Endothelial cell of umbilical vein (primary cell): ENCODE measurements at regions of chr6 and their contacts with region 1.

Region 1: DNA sequence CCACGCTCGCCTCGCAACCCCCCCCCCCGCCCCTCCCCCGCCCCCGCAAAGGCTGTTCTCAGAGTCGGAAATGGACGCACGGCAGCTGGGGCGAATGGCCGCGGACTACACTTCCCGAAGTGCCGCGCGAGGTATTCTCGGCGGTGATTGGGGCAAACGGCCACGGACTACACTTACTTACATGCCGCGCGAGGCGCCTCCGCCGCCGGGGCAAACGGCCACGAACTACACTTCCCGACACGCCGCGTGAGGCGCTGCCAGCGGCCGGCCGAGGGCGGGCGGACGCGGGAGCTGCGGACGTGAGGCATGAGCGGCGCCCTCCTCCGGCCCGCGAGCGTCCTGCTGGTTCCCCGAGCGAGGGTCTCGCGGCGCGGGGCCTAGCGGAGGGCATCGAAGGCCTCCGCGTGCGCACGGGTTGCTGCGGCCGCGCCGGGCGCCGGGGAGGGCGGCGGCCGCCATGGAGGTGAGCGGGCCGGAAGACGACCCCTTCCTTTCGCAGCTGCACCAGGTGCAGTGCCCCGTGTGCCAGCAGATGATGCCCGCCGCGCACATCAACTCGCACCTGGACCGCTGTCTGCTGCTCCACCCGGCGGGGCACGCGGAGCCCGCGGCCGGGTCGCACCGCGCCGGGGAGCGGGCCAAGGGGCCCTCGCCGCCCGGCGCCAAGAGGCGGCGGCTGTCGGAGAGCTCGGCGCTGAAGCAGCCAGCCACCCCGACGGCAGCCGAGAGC is at the start of gene WRNIP1:
- DNase-seq: peak; percentile 99
- H3K4me3 ChIP-seq: peak within 1 kb of the TSS; percentile 72 to 98 (median 97)
- H3K27ac ChIP-seq: peak within 1 kb of the TSS; percentile 79
- H3K4me1 ChIP-seq: peaks cover 40% of the 10 kb centered on the region
- H3K27me3 ChIP-seq: no peaks in the 10 kb centered on the region
- CTCF ChIP-seq: peak; percentile 65 to 66
- POLR2A ChIP-seq: no peak
- total RNA-seq, gene WRNIP1: 47.7 and 50.1 TPM in 2 replicates

Region 2: GRCh38 chr6:2111162-2111677 is 654.1 kb before region 1 on chr6:
- CTCF ChIA-PET with region 1: no interaction called
- POLR2A ChIA-PET with region 1: no interaction called
- dilution Hi-C with region 1: no loop called
- intact Hi-C with region 1: loop called (anchors 5 kb)
- DNase-seq: peak; percentile 97
- H3K4me3 ChIP-seq: peak overlapping the region in 1 of 3 experiments; percentile 51
- H3K27ac ChIP-seq: peak overlapping the region; percentile 76
- H3K4me1 ChIP-seq: peaks cover 40% of the 10 kb centered on the region
- H3K27me3 ChIP-seq: no peaks in the 10 kb centered on the region
- CTCF ChIP-seq: no peak
- POLR2A ChIP-seq: no peak

Region 3: GRCh38 chr6:2718334-2719092 is 46.8 kb before region 1 on chr6:
- CTCF ChIA-PET with region 1: no interaction called
- POLR2A ChIA-PET with region 1: no interaction called
- dilution Hi-C with region 1: no loop called
- intact Hi-C with region 1: loop called (anchors 1 kb)
- DNase-seq: peak; percentile 81
- H3K4me3 ChIP-seq: no peak overlapping the region
- H3K27ac ChIP-seq: peak overlapping the region; percentile 89
- H3K4me1 ChIP-seq: peaks cover 23% of the 10 kb centered on the region
- H3K27me3 ChIP-seq: no peaks in the 10 kb centered on the region
- CTCF ChIP-seq: no peak
- POLR2A ChIP-seq: no peak

Region 4: DNA sequence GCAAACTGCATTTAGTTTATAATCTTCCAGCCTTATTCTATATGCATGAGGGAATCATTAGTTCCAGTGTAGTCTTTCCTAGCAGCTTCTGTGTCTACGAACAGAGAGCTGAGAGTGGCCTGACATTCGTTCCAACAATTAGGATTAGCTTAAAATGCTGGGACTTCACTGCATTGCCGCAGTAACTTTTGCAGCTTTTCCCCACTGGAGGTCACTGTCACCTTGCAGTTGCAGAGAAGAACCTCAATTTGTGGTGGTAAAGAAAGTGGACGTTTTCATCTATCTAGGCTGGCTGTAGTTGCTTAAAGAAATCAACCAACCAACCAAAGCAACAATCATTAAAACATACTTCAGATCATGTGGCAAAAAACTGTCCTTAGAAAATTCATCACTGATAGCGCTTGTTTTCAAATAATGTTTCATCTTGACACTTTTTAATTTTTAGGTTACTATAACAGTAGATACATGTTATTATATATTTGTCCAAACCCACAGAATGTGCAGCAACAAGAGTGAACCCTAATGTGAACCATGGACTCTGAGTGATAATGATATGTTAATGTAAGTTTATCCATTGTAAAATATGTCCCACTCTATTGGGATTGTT is 26.9 kb before region 1 on chr6:
- CTCF ChIA-PET with region 1: interaction called, 53 read pairs
- POLR2A ChIA-PET with region 1: no interaction called
- dilution Hi-C with region 1: no loop called
- intact Hi-C with region 1: loop called (anchors 2 kb)
- DNase-seq: peak; percentile 72
- H3K4me3 ChIP-seq: no peak overlapping the region
- H3K27ac ChIP-seq: no peak overlapping the region
- H3K4me1 ChIP-seq: no peaks in the 10 kb centered on the region
- H3K27me3 ChIP-seq: no peaks in the 10 kb centered on the region
- CTCF ChIP-seq: peak; percentile 54 to 64
- POLR2A ChIP-seq: no peak

Region 5: DNA sequence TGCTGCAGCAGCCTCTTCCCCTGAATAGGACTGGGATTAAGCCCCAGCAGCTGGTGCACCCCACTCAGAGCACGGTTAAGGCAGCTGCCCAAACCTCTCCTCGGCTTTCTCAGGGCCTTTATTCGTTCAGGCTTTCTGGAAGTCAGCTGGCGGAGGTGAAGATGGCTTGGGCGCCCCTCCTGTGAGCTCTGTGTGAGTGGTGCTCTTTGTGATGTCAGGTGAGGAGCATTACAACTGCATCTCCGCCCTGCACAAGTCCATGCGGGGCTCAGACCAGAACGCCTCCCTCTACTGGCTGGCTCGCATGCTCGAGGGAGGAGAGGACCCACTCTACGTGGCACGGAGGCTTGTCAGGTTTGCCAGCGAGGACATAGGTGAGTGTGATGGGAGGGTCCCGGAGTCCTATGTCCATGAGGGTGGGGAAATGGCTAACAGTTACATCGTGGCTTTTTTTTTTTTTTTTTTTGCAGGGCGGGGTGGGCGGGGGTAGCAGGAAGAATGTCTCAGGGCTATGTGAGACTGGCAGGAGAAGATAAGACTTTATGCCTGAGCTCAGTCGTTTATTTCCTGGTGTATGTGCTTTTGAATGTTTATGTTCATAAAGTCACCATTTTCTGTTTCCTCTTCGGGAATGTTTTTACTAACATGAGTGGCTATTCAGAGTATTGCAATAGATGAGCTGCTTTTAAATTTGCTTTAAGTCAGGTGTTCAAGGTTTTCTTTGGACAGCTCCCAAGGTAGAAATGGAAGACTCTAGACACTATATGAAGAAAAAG is 18.0 kb after region 1 on chr6:
- CTCF ChIA-PET with region 1: interaction called, 54 read pairs
- POLR2A ChIA-PET with region 1: interaction called, 12 read pairs
- dilution Hi-C with region 1: no loop called
- intact Hi-C with region 1: loop called (anchors 1 kb)
- DNase-seq: peak; percentile 94
- H3K4me3 ChIP-seq: peak overlapping the region in 1 of 3 experiments; percentile 8
- H3K27ac ChIP-seq: peak overlapping the region; percentile 73
- H3K4me1 ChIP-seq: peaks cover 23% of the 10 kb centered on the region
- H3K27me3 ChIP-seq: no peaks in the 10 kb centered on the region
- CTCF ChIP-seq: peak in 1 of 2 donors; percentile 35
- POLR2A ChIP-seq: no peak

Region 6: DNA sequence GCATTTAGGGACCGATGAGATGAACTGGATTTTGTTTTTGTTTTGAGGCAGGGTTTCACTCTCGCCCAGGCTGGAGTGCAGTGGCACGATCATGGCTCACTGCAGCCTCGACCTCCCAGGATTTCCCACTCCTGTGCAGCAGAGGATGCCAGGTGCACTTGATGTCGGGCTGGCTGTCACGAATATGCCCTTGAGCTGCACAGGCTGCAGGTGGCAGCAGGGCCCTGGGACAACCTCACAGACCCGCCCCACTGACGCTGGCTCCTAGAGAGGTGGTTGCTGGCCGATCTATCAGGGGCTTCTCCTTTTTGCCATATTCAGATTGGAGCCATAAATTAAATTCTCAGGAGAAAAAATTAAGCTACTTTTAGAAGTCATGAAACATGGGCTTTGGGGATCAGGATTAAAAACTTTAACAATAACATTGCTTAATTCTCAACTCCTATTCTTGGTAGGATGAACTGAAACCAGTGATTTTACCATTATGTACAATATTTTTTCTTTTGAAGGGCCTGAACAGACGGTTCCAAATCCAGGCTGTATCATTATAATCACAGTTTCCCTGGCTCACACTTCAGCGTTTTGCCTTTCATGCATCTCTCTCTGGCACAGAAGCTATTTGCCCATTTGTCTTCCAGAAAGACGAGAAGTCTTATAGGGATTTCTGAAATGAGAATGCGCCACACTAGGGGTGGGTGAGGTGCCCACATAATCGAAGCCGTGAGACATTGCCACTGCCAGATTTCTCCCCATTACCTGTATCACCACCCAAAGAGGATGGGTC is 266.7 kb after region 1 on chr6:
- CTCF ChIA-PET with region 1: no interaction called
- POLR2A ChIA-PET with region 1: no interaction called
- dilution Hi-C with region 1: no loop called
- intact Hi-C with region 1: no loop called
- DNase-seq: no peak
- H3K4me3 ChIP-seq: no peak overlapping the region
- H3K27ac ChIP-seq: no peak overlapping the region
- H3K4me1 ChIP-seq: no peaks in the 10 kb centered on the region
- H3K27me3 ChIP-seq: peaks cover 0 to 3% of the 10 kb centered on the region in 2 experiments
- CTCF ChIP-seq: no peak
- POLR2A ChIP-seq: no peak

Region 7: DNA sequence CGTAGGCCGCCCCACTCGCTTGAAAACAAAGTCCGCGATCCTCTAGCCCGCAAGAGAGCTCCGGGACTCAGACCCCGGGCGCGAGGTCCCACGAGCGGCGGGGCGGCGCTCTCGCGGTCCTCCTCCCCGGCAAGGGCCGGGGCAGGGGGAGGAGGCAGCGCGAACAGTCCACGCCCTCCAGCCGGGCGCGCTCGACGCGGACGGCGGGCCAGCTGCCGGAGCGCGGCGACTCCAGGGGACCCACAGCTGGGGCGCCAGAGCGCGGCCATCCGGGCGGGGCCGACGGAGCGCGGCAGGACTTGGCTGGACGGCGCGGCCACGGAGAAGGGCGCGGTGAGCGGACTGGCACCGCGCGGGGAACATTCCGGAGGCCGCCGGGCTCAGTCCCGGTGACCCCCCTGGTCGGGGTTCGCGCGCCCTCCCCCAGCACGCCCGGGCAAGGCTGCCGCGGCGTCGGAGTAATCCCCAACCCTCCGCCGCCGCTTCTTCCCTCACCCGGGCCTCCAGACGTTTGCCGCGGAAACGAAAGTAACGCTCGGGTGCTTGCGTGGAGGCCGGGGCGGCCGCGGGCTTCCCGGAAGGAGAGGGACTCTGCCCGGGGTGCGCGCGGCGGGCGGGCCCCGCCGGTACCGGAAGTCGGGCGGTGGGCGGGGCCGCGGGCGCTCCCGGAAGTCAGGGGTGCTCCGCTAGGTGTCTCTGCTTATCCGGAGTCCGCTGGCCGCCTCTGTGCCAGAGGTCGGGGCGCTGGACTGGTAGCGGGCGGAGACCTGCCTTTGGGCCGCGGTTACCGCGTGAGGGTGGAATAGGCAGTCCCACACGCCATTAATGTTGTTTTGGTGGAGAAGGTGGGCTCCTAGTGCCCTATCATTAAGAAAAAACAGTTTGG is 303.2 kb after region 1 on chr6 and contains the start of gene RIPK1:
- CTCF ChIA-PET with region 1: no interaction called
- POLR2A ChIA-PET with region 1: no interaction called
- dilution Hi-C with region 1: no loop called
- intact Hi-C with region 1: loop called (anchors 2 kb)
- DNase-seq: peak; percentile 82
- H3K4me3 ChIP-seq: peak within 1 kb of the TSS; percentile 66 to 92 (median 78)
- H3K27ac ChIP-seq: peak within 1 kb of the TSS; percentile 73
- H3K4me1 ChIP-seq: peaks cover 9% of the 10 kb centered on the region
- H3K27me3 ChIP-seq: peaks cover 0 to 7% of the 10 kb centered on the region in 2 experiments
- CTCF ChIP-seq: peak in 1 of 2 donors; percentile 14
- POLR2A ChIP-seq: peak; percentile 78
- total RNA-seq, gene RIPK1: 20.2 and 20.6 TPM in 2 replicates

Region 8: DNA sequence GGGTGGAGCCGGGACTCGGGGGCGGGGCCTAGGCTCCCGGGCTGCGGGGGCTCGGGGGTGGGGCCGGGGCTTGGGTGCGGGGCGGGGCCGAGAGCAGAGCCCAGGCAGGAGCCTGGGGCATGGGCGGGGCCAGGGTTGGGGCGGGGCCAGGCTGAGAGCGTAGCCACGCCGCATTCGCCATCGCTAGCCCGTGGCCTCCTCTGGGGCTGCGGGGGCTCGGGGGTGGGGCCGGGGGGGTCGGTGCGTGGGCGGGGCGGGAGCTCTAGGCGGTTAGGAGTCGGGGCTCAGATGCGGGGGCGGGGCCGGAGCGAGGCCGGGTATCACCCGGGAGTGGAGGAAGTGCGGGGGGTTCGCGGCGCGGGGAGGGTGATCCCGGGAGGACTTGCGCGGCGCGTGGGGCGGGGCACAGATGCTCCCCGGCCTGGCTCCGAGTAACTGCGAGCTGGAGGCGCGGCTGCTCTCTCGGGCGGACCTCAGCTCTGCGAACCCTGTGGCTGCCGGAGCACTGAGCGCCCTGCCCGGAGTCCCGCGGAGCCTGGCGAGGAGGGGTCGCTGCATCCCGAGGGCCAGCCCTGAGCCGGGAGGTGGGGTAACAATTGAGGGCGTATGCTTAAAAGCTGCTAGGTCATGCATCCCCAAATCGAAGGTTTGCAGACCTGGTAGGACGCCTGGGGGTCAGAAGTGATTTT is 1370.5 kb after region 1 on chr6:
- CTCF ChIA-PET with region 1: no interaction called
- POLR2A ChIA-PET with region 1: no interaction called
- dilution Hi-C with region 1: no loop called
- intact Hi-C with region 1: no loop called
- DNase-seq: peak; percentile 92
- H3K4me3 ChIP-seq: peak overlapping the region; percentile 48 to 75 (median 72)
- H3K27ac ChIP-seq: peak overlapping the region; percentile 24
- H3K4me1 ChIP-seq: peaks cover 22% of the 10 kb centered on the region
- H3K27me3 ChIP-seq: no peaks in the 10 kb centered on the region
- CTCF ChIP-seq: no peak
- POLR2A ChIP-seq: peak; percentile 58